CD4-positive, alpha-beta memory T cell (primary cell): ENCODE measurements at regions of chr16 and their contacts with region 1.

Region 1: GRCh38 chr16:88785106-88785924 is at the start of gene PIEZO1:
- DNase-seq: peak; percentile 79 to 88 (median 85)
- H3K4me3 ChIP-seq: peak within 1 kb of the TSS; percentile 26 to 70
- H3K4me3 Mint-ChIP-seq: peak within 1 kb of the TSS; percentile 79 to 94 (median 85)
- H3K27ac ChIP-seq: peak within 1 kb of the TSS; percentile 74
- H3K27ac Mint-ChIP-seq: peak within 1 kb of the TSS; percentile 17 to 95 (median 72)
- H3K4me1 ChIP-seq: peaks cover 52% of the 10 kb centered on the region
- H3K4me1 Mint-ChIP-seq: peaks cover 32 to 46% (median 41%) of the 10 kb centered on the region in 4 donors
- H3K27me3 ChIP-seq: no peaks in the 10 kb centered on the region
- H3K27me3 Mint-ChIP-seq: no peaks in the 10 kb centered on the region
- total RNA-seq, gene PIEZO1: 274 to 302 TPM

Region 2: DNA sequence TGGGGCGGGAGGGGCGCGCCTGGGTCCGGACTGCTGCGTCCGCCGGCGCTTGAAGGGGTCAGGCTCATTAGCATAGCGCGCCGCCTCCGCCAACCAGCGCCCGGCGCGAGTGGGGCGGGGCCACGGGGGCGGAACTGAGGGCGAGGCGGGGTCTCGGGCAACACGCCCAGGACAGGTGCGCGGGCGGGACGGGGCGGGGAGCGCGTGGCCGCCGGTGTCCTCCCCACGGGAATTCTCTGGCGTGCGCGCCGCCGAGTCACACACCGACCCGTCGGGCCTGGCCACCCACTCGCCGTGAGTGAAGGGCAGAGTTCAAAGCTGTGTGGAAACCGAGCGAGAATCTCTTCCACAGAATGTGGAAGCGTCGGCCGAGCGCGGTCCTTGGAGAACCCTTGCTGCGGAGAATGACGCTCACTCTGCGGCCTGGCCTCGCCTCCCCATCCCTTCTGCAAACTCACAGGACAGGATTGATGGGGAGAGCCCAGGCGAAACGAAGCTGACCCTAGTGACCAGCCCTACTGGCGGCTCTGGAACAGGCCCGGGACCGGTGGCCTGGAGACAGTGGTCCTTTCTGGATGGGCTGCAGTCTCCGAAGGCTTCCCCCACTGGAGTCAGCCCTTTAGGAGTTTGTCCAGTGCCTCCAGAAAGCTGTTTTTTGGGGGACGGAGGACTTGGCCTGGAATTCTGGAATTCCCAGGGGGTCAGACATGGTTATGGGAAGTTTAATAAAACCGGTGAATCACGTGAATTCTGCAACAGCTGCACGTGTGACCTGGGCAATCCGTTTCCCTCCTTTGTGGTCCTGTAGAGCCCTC is 98.7 kb before region 1 on chr16 and contains the start of gene SNAI3:
- CTCF ChIA-PET with region 1: interaction called, 5 read pairs
- POLR2A ChIA-PET with region 1: interaction called, 3 read pairs
- intact Hi-C with region 1: loop called (anchors 5 kb)
- DNase-seq: peak; percentile 74 to 84 (median 78)
- H3K4me3 ChIP-seq: peak within 1 kb of the TSS; percentile 82 to 90
- H3K4me3 Mint-ChIP-seq: peak within 1 kb of the TSS; percentile 81 to 89 (median 84)
- H3K27ac ChIP-seq: peak within 1 kb of the TSS; percentile 68
- H3K27ac Mint-ChIP-seq: peak within 1 kb of the TSS; percentile 25 to 96 (median 79)
- H3K4me1 ChIP-seq: peaks cover 68% of the 10 kb centered on the region
- H3K4me1 Mint-ChIP-seq: peaks cover 26 to 67% (median 49%) of the 10 kb centered on the region in 4 donors
- H3K27me3 ChIP-seq: no peaks in the 10 kb centered on the region
- H3K27me3 Mint-ChIP-seq: no peaks in the 10 kb centered on the region
- total RNA-seq, gene SNAI3: 14.0 to 15.7 TPM

Region 3: DNA sequence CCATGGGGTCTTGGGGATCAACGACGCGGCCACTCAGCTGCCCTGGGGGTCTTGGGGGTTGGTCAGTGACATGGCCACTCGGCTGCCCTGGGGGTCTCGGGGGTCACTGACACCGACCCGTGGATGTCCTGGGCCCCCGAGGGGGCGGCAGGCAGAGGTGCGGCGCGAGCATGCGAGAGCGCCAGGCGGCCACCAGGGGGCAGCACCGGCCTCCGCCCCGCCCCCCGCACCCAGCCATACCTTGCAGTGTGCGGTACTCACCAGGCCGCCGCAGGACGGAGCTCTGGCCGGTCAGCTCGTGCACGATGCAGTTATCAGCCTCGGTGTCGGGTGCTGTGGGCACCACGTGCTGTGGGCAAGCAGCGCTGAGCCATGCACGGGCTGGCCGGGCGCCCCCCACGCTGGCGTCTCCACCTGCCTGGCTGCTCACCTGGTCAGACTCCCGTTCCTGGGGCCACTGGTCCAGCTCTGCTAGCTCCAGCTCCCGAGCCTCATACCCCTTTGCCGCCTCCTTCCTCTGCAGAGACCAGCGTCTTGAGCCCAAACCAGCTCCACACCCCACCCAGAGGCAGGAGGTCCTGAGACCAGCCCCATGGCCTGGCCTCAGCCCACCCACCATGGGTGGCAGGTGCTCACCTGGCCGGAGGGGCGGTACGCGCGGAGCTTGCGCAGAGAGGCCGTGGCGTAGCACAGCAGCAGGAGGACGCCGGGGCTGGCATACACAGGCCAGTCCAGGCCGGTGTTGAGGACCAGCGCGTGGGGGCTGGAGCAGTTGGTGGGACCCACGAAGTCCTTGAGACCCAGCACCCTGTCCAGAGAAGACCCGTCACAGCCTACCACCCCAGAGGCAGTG is 47.8 kb before region 1 on chr16:
- CTCF ChIA-PET with region 1: interaction called, 137 read pairs
- POLR2A ChIA-PET with region 1: interaction called, 138 read pairs
- intact Hi-C with region 1: loop called (anchors 1 kb)
- DNase-seq: peak; percentile 55 to 80 (median 75)
- H3K4me3 ChIP-seq: no peak overlapping the region
- H3K4me3 Mint-ChIP-seq: no peak overlapping the region
- H3K27ac ChIP-seq: peak overlapping the region; percentile 6
- H3K27ac Mint-ChIP-seq: peak overlapping the region in 4 of 7 donors; percentile 52 to 78 (median 54)
- H3K4me1 ChIP-seq: peaks cover 6% of the 10 kb centered on the region
- H3K4me1 Mint-ChIP-seq: peaks cover 0 to 13% (median 2%) of the 10 kb centered on the region in 4 donors
- H3K27me3 ChIP-seq: no peaks in the 10 kb centered on the region
- H3K27me3 Mint-ChIP-seq: no peaks in the 10 kb centered on the region

Region 4: GRCh38 chr16:88754912-88755744 is 30.2 kb before region 1 on chr16:
- CTCF ChIA-PET with region 1: interaction called, 20 read pairs
- POLR2A ChIA-PET with region 1: interaction called, 52 read pairs
- intact Hi-C with region 1: loop called (anchors 2 kb)
- DNase-seq: peak in 3 of 5 donors; percentile 30 to 38 (median 31)
- H3K4me3 ChIP-seq: no peak overlapping the region
- H3K4me3 Mint-ChIP-seq: no peak overlapping the region
- H3K27ac ChIP-seq: no peak overlapping the region
- H3K27ac Mint-ChIP-seq: peak overlapping the region; percentile 29 to 81 (median 74)
- H3K4me1 ChIP-seq: peaks cover 35% of the 10 kb centered on the region
- H3K4me1 Mint-ChIP-seq: peaks cover 17 to 43% (median 24%) of the 10 kb centered on the region in 4 donors
- H3K27me3 ChIP-seq: no peaks in the 10 kb centered on the region
- H3K27me3 Mint-ChIP-seq: no peaks in the 10 kb centered on the region

Region 5: GRCh38 chr16:88770461-88771293 is 14.6 kb before region 1 on chr16:
- CTCF ChIA-PET with region 1: interaction called, 5 read pairs
- POLR2A ChIA-PET with region 1: interaction called, 62 read pairs
- intact Hi-C with region 1: loop called (anchors 2 kb)
- DNase-seq: peak in 1 of 5 donors; percentile 41
- H3K4me3 ChIP-seq: peak overlapping the region in 1 of 2 donors; percentile 11
- H3K4me3 Mint-ChIP-seq: peak overlapping the region in 4 of 8 donors; percentile 21 to 40 (median 36)
- H3K27ac ChIP-seq: peak overlapping the region; percentile 16
- H3K27ac Mint-ChIP-seq: peak overlapping the region; percentile 22 to 78 (median 56)
- H3K4me1 ChIP-seq: peaks cover 86% of the 10 kb centered on the region
- H3K4me1 Mint-ChIP-seq: peaks cover 11 to 57% (median 31%) of the 10 kb centered on the region in 4 donors
- H3K27me3 ChIP-seq: no peaks in the 10 kb centered on the region
- H3K27me3 Mint-ChIP-seq: no peaks in the 10 kb centered on the region

Region 6: DNA sequence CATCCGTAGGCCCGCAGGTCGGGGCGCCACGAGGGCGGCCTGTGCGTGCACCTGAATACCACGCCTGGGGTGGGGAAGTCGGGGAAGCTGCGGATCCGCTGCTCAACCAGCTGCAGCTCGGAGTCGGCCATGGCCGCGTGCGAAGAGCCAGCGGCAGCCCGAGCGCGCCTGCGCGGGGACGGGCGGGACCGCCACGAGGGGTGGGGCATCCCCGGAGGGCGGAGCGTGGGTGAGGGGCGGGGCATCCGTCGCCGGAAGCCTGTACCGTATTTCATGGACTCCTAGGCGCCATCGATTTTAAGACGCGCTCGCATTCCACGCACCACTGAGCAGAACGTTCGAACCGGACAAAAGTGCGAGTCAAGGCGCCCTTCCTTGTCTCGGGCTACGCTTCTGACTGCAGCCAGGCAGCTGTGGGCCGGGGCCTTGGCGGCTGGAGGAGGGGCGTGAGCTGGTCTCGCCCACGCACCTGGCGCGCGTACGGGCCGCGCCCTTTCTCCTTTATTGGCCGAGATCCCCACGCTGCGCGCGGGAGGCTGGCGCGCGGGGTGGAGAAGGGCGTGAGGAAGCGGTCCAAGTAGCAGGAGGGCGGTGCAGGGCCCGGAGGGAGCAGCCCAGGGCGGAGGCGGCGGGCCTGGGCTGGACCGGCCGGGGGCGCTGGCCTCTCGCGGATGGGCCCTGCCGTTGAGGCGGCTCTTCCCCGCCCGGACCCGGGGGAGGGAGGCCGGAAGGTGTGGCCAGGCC is 26.6 kb after region 1 on chr16 and contains the start of gene APRT:
- CTCF ChIA-PET with region 1: interaction called, 23 read pairs
- POLR2A ChIA-PET with region 1: interaction called, 206 read pairs
- intact Hi-C with region 1: loop called (anchors 1 kb)
- DNase-seq: peak; percentile 94 to 99 (median 97)
- H3K4me3 ChIP-seq: peak within 1 kb of the TSS; percentile 90 to 94
- H3K4me3 Mint-ChIP-seq: peak within 1 kb of the TSS; percentile 95 to 100 (median 97)
- H3K27ac ChIP-seq: peak within 1 kb of the TSS; percentile 67
- H3K27ac Mint-ChIP-seq: peak within 1 kb of the TSS; percentile 88 to 98 (median 97)
- H3K4me1 ChIP-seq: peaks cover 21% of the 10 kb centered on the region
- H3K4me1 Mint-ChIP-seq: peaks cover 1 to 28% (median 15%) of the 10 kb centered on the region in 4 donors
- H3K27me3 ChIP-seq: no peaks in the 10 kb centered on the region
- H3K27me3 Mint-ChIP-seq: no peaks in the 10 kb centered on the region
- total RNA-seq, gene APRT: 171 to 175 TPM